ENCODE measurements at regions of chr3 and their contacts with region 1.

Region 1: GRCh38 chr3:59575113-59576001 is 525.5 kb upstream of the CFAP20DC start:
- DNase-seq: peak; percentile 68 to 97 (median 88)
- ATAC-seq: peak; percentile 88 to 95 (median 93)
- H3K4me3 ChIP-seq: no peak overlapping the region
- H3K27ac ChIP-seq: no peak overlapping the region
- H3K4me1 ChIP-seq: no peaks in the 10 kb centered on the region
- H3K27me3 ChIP-seq: no peaks in the 10 kb centered on the region
- CTCF ChIP-seq: peak; percentile 91 to 99 (median 96)

Region 2: DNA sequence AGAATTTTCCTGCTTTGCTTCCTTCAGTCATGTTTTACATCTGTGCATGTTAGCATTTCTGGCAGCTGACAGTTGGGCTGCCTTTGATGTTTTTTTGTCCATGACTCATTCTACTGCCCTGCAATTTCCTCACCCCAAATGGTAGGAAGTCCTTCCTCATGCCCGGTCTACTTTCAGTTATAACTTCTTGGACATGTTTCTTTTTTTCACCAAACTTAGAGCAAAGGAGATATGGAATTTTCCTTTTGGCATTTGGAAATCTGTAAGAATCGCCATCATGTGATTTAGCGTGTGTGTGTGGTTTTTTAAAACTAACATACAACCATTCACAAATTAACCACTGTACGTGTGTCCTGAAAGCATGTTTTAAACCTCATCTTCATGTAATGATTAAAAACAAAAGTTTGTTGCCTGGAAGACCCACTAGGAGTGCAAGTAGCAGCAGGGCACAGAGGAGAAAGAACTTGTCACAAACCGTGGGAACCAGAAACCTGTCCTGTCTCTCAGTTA is 94.8 kb before region 1 on chr3:
- intact Hi-C with region 1: no loop called
- DNase-seq: peak in 1 of 6 donors; percentile 11
- ATAC-seq: peak; percentile 24 to 82 (median 56)
- H3K4me3 ChIP-seq: no peak overlapping the region
- H3K27ac ChIP-seq: no peak overlapping the region
- H3K4me1 ChIP-seq: peaks cover 0 to 8% (median 0%) of the 10 kb centered on the region in 3 donors
- H3K27me3 ChIP-seq: no peaks in the 10 kb centered on the region
- CTCF ChIP-seq: no peak

Region 3: DNA sequence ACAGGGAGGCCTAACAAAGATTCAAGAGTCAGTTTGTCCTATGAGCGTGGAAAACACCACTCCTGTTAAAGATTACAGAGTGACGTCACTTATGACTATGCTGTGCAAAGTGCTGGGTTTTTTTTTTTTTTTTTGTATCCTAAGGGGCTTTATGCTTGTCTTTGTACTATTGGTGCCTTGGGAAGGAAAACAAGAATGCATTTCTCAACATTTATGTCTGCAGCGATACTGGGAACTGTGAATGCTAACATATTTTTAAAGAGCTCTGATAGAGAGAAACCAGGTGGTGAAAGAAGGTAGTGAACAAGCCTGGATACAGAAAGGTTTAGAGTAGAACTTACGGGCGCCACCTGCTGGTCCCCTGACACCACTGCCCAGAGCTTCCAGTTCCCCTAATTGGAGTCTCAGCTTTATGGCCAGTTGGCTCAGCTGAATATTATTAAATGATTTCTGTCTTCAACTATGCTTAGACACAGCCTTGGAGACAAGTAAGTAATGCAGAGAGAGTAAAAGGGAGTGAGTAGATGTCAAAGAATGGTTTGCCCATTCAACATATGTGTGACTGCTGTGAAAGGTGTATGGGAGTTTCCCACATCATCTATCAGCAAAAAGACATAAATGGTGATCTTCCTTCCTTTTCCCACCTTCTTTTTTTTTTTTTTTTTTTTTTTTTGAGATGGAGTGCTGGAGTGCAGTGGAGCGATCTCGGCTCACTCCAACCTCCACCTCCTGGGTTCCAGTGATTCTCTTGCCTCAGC is 282.4 kb after region 1 on chr3:
- intact Hi-C with region 1: loop called in 1 of 3 experiments (anchors 10 kb)
- DNase-seq: peak; percentile 64 to 85 (median 73)
- ATAC-seq: peak; percentile 98 to 99 (median 98)
- H3K4me3 ChIP-seq: no peak overlapping the region
- H3K27ac ChIP-seq: peak overlapping the region in 2 of 4 donors; percentile 31 to 37
- H3K4me1 ChIP-seq: peaks cover 0 to 6% (median 0%) of the 10 kb centered on the region in 3 donors
- H3K27me3 ChIP-seq: no peaks in the 10 kb centered on the region
- CTCF ChIP-seq: peak; percentile 78 to 94 (median 86)

Region 4: DNA sequence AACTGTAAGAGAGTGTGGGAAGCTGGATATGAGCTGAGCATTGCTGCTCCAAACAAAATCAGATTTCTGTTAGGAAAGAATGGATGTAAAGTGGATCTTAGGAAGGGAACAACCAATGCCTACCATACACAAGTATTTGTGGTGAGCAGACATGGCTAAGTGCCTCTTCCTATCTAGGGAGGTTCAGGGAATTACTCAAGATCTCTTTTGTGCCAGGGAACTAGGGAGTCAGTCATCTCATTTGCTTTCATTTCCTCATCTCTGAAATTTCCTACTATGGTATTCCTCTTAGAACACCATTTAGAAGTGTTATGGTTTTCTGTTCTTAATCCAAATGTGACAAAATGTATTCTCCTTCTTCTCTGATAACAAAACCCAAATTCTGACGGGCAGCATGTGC is 1279.4 kb after region 1 on chr3:
- intact Hi-C with region 1: no loop called
- DNase-seq: no peak
- ATAC-seq: peak in 1 of 4 donors; percentile 27
- H3K4me3 ChIP-seq: no peak overlapping the region
- H3K27ac ChIP-seq: no peak overlapping the region
- H3K4me1 ChIP-seq: no peaks in the 10 kb centered on the region
- H3K27me3 ChIP-seq: no peaks in the 10 kb centered on the region
- CTCF ChIP-seq: no peak

Measured in pancreas (tissue), 10 donors.